PC-3 (cell line): ENCODE measurements at regions of chr14 and their contacts with region 1.

Region 1: GRCh38 chr14:41957415-41957814 is 350.7 kb downstream of the LRFN5 start:
- DNase-seq: peak; percentile 87
- ATAC-seq: peak; percentile 94
- H3K4me3 ChIP-seq: no peak overlapping the region
- H3K27ac ChIP-seq: peak overlapping the region; percentile 54; the same call in 1 of the 2 replicates
- H3K4me1 ChIP-seq: peaks cover 16% of the 10 kb centered on the region
- H3K27me3 ChIP-seq: no peaks in the 10 kb centered on the region
- CTCF ChIP-seq: no peak

Region 2: GRCh38 chr14:41699491-41699890 is 257.9 kb before region 1 on chr14:
- CTCF ChIA-PET with region 1: no interaction called
- POLR2A ChIA-PET with region 1: no interaction called
- intact Hi-C with region 1: no loop called
- DNase-seq: peak; percentile 8
- ATAC-seq: peak; percentile 42
- H3K4me3 ChIP-seq: no peak overlapping the region
- H3K27ac ChIP-seq: no peak overlapping the region
- H3K4me1 ChIP-seq: no peaks in the 10 kb centered on the region
- H3K27me3 ChIP-seq: no peaks in the 10 kb centered on the region
- CTCF ChIP-seq: no peak

Region 3: GRCh38 chr14:41830679-41831078 is 126.7 kb before region 1 on chr14:
- CTCF ChIA-PET with region 1: no interaction called
- POLR2A ChIA-PET with region 1: no interaction called
- intact Hi-C with region 1: loop called (anchors 2 kb)
- DNase-seq: no peak
- ATAC-seq: peak; percentile 45
- H3K4me3 ChIP-seq: no peak overlapping the region
- H3K27ac ChIP-seq: no peak overlapping the region
- H3K4me1 ChIP-seq: peaks cover 17% of the 10 kb centered on the region; the same call in 1 of the 2 replicates
- H3K27me3 ChIP-seq: no peaks in the 10 kb centered on the region
- CTCF ChIP-seq: no peak

Region 4: DNA sequence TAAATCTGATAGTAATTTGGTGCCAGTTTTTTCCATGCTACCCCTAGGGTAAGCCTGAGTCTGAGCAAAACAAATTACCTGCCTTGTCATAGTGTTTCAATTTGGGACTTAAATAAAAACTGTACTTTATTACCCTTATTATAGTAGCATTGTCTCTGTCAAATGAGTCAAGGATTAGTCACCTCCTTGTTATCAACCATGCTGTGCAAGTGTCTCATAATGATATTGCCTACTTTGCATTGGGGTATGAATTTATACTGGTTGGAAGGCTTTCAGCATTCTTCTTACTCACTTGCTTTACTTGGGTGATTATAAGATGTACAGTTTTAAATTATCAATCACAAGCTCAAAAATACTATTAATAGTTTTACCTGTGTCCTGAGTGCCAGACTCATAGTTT is 29.3 kb after region 1 on chr14:
- CTCF ChIA-PET with region 1: no interaction called
- POLR2A ChIA-PET with region 1: no interaction called
- intact Hi-C with region 1: loop called (anchors 1 kb)
- DNase-seq: peak; percentile 75
- ATAC-seq: peak; percentile 99
- H3K4me3 ChIP-seq: no peak overlapping the region
- H3K27ac ChIP-seq: no peak overlapping the region
- H3K4me1 ChIP-seq: peaks cover 16% of the 10 kb centered on the region
- H3K27me3 ChIP-seq: no peaks in the 10 kb centered on the region
- CTCF ChIP-seq: no peak

Region 5: GRCh38 chr14:42023447-42023846 is 66.0 kb after region 1 on chr14:
- CTCF ChIA-PET with region 1: no interaction called
- POLR2A ChIA-PET with region 1: no interaction called
- intact Hi-C with region 1: loop called (anchors 2 kb)
- DNase-seq: peak; percentile 65
- ATAC-seq: peak; percentile 94
- H3K4me3 ChIP-seq: no peak overlapping the region
- H3K27ac ChIP-seq: no peak overlapping the region
- H3K4me1 ChIP-seq: no peaks in the 10 kb centered on the region
- H3K27me3 ChIP-seq: no peaks in the 10 kb centered on the region
- CTCF ChIP-seq: no peak

Region 6: GRCh38 chr14:42140831-42141279 is 183.4 kb after region 1 on chr14:
- CTCF ChIA-PET with region 1: no interaction called
- POLR2A ChIA-PET with region 1: no interaction called
- intact Hi-C with region 1: loop called (anchors 1 kb)
- DNase-seq: peak; percentile 90
- ATAC-seq: peak; percentile 93
- H3K4me3 ChIP-seq: peak overlapping the region; percentile 1; the same call in 1 of the 2 replicates
- H3K27ac ChIP-seq: peak overlapping the region; percentile 89
- H3K4me1 ChIP-seq: peaks cover 28% of the 10 kb centered on the region
- H3K27me3 ChIP-seq: no peaks in the 10 kb centered on the region
- CTCF ChIP-seq: no peak